Right lobe of liver (tissue), 6 donors: ENCODE measurements at regions of chr5 and their contacts with region 1.

Region 1: GRCh38 chr5:140244525-140245025 is 58.3 kb downstream of the PFDN1 start:
- DNase-seq: peak; percentile 89 to 90 (median 89)
- ATAC-seq: peak; percentile 78 to 83 (median 80)
- H3K4me3 ChIP-seq: no peak overlapping the region
- H3K27ac ChIP-seq: no peak overlapping the region
- H3K4me1 ChIP-seq: peaks cover 0 to 20% (median 6%) of the 10 kb centered on the region in 4 donors
- H3K27me3 ChIP-seq: no peaks in the 10 kb centered on the region
- CTCF ChIP-seq: peak; percentile 82 to 91 (median 89)
- POLR2A ChIP-seq: no peak

Region 2: GRCh38 chr5:140042643-140043500 is 201.7 kb before region 1 on chr5 and contains the start of gene NRG2:
- intact Hi-C with region 1: no loop called
- DNase-seq: peak; percentile 53 to 67 (median 56)
- ATAC-seq: peak; percentile 66 to 76 (median 76)
- H3K4me3 ChIP-seq: peak within 1 kb of the TSS; percentile 35 to 53 (median 38)
- H3K27ac ChIP-seq: no peak within 1 kb of the TSS
- H3K4me1 ChIP-seq: peaks cover 0 to 37% (median 0%) of the 10 kb centered on the region in 4 donors
- H3K27me3 ChIP-seq: no peaks in the 10 kb centered on the region
- CTCF ChIP-seq: peak; percentile 19 to 35 (median 31)
- POLR2A ChIP-seq: no peak
- total RNA-seq, gene NRG2: 0.07 to 0.77 (median 0.14) TPM in 5 of 6 experiments, not detected in the other

Region 3: GRCh38 chr5:140322751-140323731 is 78.5 kb after region 1 on chr5:
- intact Hi-C with region 1: no loop called
- DNase-seq: no peak
- ATAC-seq: peak in 3 of 4 donors; percentile 9 to 39 (median 37)
- H3K4me3 ChIP-seq: no peak overlapping the region
- H3K27ac ChIP-seq: no peak overlapping the region
- H3K4me1 ChIP-seq: peaks cover 0 to 7% (median 0%) of the 10 kb centered on the region in 4 donors
- H3K27me3 ChIP-seq: no peaks in the 10 kb centered on the region
- CTCF ChIP-seq: no peak
- POLR2A ChIP-seq: no peak

Region 4: GRCh38 chr5:140344683-140345423 is 100.3 kb after region 1 on chr5:
- intact Hi-C with region 1: loop called in 1 of 2 experiments (anchors 5 kb)
- DNase-seq: no peak
- ATAC-seq: peak in 1 of 4 donors; percentile 5
- H3K4me3 ChIP-seq: peak overlapping the region in 2 of 3 donors; percentile 70 to 96
- H3K27ac ChIP-seq: no peak overlapping the region
- H3K4me1 ChIP-seq: peaks cover 0 to 18% (median 5%) of the 10 kb centered on the region in 4 donors
- H3K27me3 ChIP-seq: no peaks in the 10 kb centered on the region
- CTCF ChIP-seq: no peak
- POLR2A ChIP-seq: no peak

Region 5: DNA sequence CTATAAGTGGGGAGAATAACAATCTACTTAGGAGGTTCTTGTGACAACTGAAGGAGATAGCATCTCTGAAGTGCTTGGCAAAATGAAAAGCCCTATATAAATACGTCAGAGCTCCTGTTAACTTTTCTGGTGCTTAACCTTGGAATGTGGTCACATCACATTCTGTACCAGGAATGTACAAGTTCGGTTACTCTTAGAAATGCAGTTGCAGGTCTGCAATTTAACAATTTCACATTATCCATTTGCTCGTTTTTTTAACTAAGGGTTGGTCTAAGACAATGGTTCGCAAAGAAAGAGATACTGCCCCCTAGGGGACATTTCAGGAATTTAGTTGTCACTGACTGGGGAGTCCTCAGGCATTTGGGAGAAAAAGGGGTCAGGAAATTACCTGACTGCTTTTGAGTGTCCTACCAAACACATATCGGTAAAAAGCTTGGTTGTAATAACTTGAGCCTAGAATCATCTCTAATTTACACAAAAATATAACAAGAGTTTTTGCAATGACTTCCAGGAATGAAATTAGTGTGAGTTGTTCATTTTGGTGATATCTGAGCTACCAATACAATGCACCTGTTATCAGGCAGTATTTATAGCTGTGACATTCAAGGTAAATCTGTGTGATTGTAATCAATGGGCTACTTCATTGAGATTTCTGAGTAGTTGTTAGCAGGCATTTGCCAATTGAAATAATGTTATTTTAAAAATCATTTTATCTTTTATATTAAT is 107.2 kb after region 1 on chr5:
- intact Hi-C with region 1: loop called (anchors 5 kb)
- DNase-seq: no peak
- ATAC-seq: peak; percentile 71 to 83 (median 74)
- H3K4me3 ChIP-seq: no peak overlapping the region
- H3K27ac ChIP-seq: no peak overlapping the region
- H3K4me1 ChIP-seq: peaks cover 0 to 8% (median 3%) of the 10 kb centered on the region in 4 donors
- H3K27me3 ChIP-seq: no peaks in the 10 kb centered on the region
- CTCF ChIP-seq: peak; percentile 86 to 91 (median 90)
- POLR2A ChIP-seq: no peak

Region 6: GRCh38 chr5:140357726-140358093 is 113.1 kb after region 1 on chr5:
- intact Hi-C with region 1: loop called (anchors 5 kb)
- DNase-seq: peak; percentile 80 to 84 (median 82)
- ATAC-seq: peak; percentile 96 to 99 (median 98)
- H3K4me3 ChIP-seq: no peak overlapping the region
- H3K27ac ChIP-seq: no peak overlapping the region
- H3K4me1 ChIP-seq: no peaks in the 10 kb centered on the region
- H3K27me3 ChIP-seq: no peaks in the 10 kb centered on the region
- CTCF ChIP-seq: peak; percentile 84 to 90 (median 87)
- POLR2A ChIP-seq: no peak

Region 7: GRCh38 chr5:140609126-140609525 is 364.6 kb after region 1 on chr5:
- intact Hi-C with region 1: no loop called
- DNase-seq: no peak
- ATAC-seq: peak in 1 of 4 donors; percentile 15
- H3K4me3 ChIP-seq: no peak overlapping the region
- H3K27ac ChIP-seq: peak overlapping the region in 1 of 3 donors; percentile 10
- H3K4me1 ChIP-seq: peaks cover 0 to 13% (median 3%) of the 10 kb centered on the region in 4 donors
- H3K27me3 ChIP-seq: no peaks in the 10 kb centered on the region
- CTCF ChIP-seq: no peak
- POLR2A ChIP-seq: no peak